Posterior cingulate gyrus (tissue), 11 donors: ENCODE measurements at regions of chr2 and their contacts with region 1.

Region 1: DNA sequence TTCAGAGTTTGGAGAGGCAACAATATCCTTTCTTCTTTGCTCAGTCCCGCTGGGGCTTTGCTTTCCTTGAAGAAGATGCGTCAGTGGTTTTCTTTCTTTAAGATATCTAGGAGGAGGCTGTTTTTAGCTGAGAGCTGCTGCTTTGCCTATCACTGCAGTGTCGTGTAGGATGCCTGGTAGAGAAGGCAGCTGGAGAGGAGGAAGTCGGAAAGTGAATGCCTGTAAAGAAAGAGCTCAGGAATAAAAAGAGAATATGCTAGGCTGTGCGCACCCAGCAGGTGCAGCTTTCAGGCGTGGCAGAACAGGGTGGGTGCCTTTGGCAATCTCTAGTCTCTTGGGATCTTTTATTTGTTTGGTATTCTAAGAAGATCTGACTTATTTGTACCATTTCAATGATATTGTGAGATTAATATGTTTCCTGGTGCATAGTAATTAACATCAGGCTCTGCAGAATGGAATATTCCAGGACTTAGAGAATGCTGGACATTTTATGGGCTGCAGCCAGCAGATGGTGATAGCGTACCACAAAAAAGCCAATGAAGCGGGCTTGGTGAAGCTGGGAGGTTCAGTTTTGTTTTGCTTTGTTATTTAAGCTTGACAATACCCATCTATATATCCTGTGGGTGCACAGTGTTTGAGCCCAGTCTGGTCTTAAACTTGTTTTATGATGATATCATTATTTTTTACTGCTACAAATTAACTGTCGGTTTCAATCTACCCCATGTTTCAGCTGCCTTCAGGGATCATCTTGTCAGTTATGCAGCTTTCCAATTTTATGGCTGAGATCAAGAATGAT is 34.9 kb downstream of the CAVIN2 start:
- DNase-seq: peak; percentile 32 to 93 (median 76)

Region 2: GRCh38 chr2:191617575-191617974 is 194.4 kb before region 1 on chr2:
- intact Hi-C with region 1: no loop called
- DNase-seq: no peak

Region 3: DNA sequence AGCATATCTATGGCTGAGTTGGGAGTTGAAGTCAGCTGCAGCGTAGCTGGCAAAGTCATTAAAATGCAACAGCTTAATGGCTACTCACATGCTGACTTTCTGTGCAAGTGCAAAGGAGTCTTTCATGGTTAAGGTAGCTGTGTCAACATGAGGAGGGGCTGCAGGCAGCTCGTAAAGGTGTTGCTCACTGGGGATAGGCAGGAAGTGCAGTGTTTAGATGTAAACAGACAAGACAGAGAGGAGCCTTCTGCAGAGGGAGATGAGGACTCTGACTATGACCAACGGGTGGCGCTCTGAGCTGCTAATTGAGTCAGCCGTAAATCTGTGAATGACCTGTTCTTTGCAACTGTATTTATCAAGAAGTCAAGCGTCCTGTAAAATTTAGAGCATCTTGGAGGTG is 57.2 kb after region 1 on chr2:
- intact Hi-C with region 1: loop called (anchors 5 kb)
- DNase-seq: peak in 7 of 10 donors; percentile 24 to 92 (median 64)

Region 4: GRCh38 chr2:192162392-192163042 is 350.5 kb after region 1 on chr2:
- intact Hi-C with region 1: loop called (anchors 1 kb)
- DNase-seq: peak in 7 of 10 donors; percentile 20 to 71 (median 54)

Region 5: DNA sequence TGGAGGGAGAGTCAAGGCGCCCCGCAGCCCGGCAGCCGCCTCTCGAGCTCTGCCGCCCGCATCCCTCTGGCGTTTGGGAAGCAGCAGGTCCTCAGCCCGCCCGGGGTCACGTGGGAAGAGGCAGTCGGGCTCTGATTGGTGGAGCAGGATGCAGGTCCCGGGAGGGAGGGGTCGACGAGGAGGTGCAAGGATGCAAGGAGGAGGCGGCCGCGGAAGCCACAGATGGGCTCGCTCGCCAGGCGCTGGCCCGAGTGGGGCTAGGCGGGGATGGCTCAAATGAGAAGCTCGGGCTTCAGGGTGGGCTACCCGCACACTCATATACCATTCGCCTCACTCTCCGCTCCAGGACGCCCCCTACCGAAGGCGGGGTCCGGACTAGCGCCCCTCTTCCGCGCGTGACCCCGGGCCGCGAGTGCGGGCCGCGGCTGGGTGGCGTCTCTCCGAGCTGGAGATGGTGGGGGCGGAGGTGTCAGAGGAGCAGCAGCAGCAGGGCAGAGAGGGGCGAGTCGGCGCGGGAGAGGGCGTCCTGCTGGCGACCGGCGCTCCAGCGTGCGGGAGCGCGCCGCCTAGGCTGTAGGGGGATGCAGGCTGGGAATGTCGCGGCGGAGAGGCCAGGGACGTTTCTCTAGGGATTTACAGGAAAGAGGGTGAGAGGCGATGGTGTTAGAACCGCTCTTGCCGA is 383.0 kb after region 1 on chr2 and contains the start of gene TMEFF2:
- intact Hi-C with region 1: loop called (anchors 5 kb)
- DNase-seq: peak; percentile 99 to 100 (median 100)

Region 6: GRCh38 chr2:192286093-192286701 is 474.2 kb after region 1 on chr2:
- intact Hi-C with region 1: loop called (anchors 2 kb)
- DNase-seq: peak in 6 of 10 donors; percentile 4 to 81 (median 30)